Activated B cell treated with CpG ODN at 0.5 μM for 24 hours (primary cell): ENCODE measurements at regions of chr16 and their contacts with region 1.

Region 1: DNA sequence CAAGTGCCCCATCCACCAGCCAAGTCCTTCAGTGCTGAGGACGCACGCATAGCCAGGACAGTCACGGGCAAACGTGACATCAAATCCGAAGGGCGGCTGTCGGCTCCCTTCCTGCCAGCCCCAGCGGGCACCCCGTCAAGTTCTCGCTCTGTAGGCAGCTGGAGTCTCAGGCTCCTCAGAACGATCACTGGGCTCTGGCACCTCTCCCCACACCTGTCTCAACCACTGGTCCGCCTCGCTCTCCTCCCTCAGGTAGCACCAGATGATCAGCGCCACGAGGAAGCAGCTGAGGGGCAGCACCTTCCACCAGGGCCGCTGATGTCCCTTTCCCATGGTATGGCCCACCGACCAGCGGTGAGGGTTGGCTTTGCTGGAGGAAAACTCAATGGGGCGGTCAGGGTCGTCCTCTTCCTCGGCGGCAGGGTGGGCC is 421 bp downstream of the UQCC4 start:
- DNase-seq: no peak
- ATAC-seq: no peak
- H3K4me3 Mint-ChIP-seq: peak overlapping the region; percentile 85
- H3K27ac Mint-ChIP-seq: peak overlapping the region; percentile 98
- H3K4me1 Mint-ChIP-seq: peaks cover 25% of the 10 kb centered on the region
- H3K27me3 Mint-ChIP-seq: no peaks in the 10 kb centered on the region
- CTCF ChIP-seq: no peak

Region 2: DNA sequence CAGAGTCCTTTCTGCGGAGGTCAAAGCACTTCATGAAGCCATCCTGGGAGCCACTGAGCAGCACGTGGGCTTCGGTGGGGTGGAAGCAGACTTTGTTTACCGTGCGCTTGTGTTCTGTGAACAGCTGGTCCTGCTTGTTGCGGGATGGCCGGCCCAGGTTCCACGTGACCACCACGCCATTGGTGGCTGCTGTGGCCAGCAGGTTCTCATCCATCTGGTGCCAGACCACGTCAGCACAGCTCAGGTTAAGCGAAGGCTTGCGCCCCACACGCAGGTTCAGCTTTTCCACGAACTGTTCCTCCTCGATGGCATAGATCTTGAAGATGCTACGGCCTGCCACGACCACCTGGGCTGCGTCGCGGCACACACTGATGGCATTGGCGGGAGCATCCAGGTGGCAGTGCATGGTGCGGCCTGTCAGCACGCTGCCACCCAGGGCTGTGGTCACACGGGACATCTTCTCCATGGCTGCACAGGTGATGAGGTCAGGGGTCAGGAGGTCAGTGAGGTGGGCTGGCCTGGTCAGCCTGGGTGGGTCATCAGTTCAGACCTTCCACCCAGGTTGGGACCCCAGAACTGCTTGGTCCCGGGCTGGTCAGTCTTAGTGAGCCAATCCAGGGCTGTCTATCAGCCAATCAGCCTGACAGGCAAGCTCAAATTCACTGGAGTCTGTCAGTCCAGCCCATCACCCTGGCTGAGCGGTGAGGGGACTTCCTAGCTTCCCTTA is 730.8 kb before region 1 on chr16:
- CTCF ChIA-PET with region 1: no interaction called
- POLR2A ChIA-PET with region 1: interaction called, 10 read pairs
- intact Hi-C with region 1: no loop called
- DNase-seq: no peak
- ATAC-seq: no peak
- H3K4me3 Mint-ChIP-seq: peak overlapping the region; percentile 90
- H3K27ac Mint-ChIP-seq: peak overlapping the region; percentile 82
- H3K4me1 Mint-ChIP-seq: peaks cover 33% of the 10 kb centered on the region
- H3K27me3 Mint-ChIP-seq: peaks cover 9% of the 10 kb centered on the region
- CTCF ChIP-seq: no peak

Region 3: DNA sequence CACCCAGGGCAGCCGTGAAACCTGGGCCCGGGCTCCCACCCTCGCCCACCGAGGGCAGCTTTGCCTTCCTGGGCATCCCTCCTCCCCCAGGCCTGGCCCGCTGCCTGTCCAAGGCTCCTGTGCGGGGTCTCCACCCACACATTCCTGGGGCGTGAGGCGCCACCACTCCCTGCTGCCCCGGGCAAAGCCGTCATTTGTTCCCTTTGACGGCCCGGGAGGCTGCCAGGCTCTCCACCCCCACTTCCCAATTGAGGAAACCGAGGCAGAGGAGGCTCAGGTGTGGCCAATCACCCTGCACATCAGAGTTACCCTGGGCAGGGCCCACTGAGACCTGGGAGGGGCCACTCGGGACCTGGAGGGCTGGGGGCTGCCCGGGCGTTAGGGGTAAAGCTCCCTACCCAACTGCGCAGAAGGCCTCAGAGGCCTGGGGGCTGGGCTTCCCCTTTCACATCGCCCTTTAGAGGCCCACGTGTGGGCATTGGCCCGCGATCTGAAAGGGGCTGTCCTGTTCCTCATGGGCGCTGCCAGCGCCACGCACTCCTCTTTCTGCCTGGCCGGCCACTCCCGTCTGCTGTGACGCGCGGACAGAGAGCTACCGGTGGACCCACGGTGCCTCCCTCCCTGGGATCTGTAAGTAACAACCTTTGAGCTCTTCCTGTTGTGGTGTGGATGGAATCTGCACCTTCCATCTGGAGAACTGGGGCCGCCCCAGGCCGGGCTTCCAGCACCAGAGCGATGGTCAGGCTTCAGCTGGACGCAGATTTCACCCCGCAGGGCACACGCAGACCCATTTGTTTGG is 659.4 kb before region 1 on chr16 and contains the start of gene MSLN:
- CTCF ChIA-PET with region 1: no interaction called
- POLR2A ChIA-PET with region 1: no interaction called
- intact Hi-C with region 1: no loop called
- DNase-seq: no peak
- ATAC-seq: no peak
- H3K4me3 Mint-ChIP-seq: no peak within 1 kb of the TSS
- H3K27ac Mint-ChIP-seq: no peak within 1 kb of the TSS
- H3K4me1 Mint-ChIP-seq: no peaks in the 10 kb centered on the region
- H3K27me3 Mint-ChIP-seq: peaks cover 10% of the 10 kb centered on the region
- CTCF ChIP-seq: no peak
- total RNA-seq, gene MSLN: not detected in 2 replicates

Region 4: GRCh38 chr16:1351582-1352362 is 68.4 kb before region 1 on chr16 and contains the starts of genes GNPTG and TSR3:
- CTCF ChIA-PET with region 1: no interaction called
- POLR2A ChIA-PET with region 1: interaction called, 6 read pairs
- intact Hi-C with region 1: loop called (anchors 2 kb)
- DNase-seq: peak; percentile 92
- ATAC-seq: peak; percentile 93
- H3K4me3 Mint-ChIP-seq: peak within 1 kb of the TSS; percentile 85
- H3K27ac Mint-ChIP-seq: peak within 1 kb of the TSS; percentile 77
- H3K4me1 Mint-ChIP-seq: peaks cover 30% of the 10 kb centered on the region
- H3K27me3 Mint-ChIP-seq: no peaks in the 10 kb centered on the region
- CTCF ChIP-seq: no peak
- total RNA-seq, gene GNPTG: 36.3 and 40.2 TPM in 2 replicates
- total RNA-seq, gene TSR3: 45.3 and 49.0 TPM in 2 replicates

Region 5: DNA sequence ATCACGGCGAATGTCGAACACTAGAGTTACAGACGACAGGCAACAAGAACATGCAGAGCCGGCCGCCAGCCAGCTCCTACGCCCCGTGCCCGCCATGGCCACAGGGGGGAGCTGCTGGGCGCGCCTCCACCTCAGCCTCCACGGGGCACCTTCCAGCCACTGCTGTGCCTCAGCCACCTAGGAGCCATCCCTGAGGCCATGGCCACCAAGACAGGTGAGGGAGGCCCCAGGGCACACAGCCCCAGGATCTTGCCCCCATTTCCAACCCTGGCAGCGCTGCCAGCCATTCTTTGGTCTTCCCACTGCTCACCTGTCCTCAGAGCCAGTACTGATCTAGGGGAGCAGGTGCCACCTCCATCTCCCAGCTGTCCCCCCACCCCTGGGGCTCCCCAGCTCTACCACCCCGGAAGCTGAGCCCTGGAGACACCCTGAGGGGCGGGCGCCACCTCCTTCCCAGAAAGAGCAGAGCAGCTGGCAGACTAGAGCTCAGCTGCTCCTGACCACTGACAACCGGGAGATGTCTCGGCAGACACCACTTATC is 56.6 kb before region 1 on chr16:
- CTCF ChIA-PET with region 1: no interaction called
- POLR2A ChIA-PET with region 1: no interaction called
- intact Hi-C with region 1: no loop called
- DNase-seq: peak; percentile 72
- ATAC-seq: peak; percentile 96
- H3K4me3 Mint-ChIP-seq: no peak overlapping the region
- H3K27ac Mint-ChIP-seq: no peak overlapping the region
- H3K4me1 Mint-ChIP-seq: peaks cover 3% of the 10 kb centered on the region
- H3K27me3 Mint-ChIP-seq: no peaks in the 10 kb centered on the region
- CTCF ChIP-seq: no peak

Region 6: GRCh38 chr16:1443403-1443973 is 23.4 kb after region 1 on chr16:
- CTCF ChIA-PET with region 1: no interaction called
- POLR2A ChIA-PET with region 1: interaction called, 16 read pairs
- intact Hi-C with region 1: no loop called
- DNase-seq: no peak
- ATAC-seq: no peak
- H3K4me3 Mint-ChIP-seq: no peak overlapping the region
- H3K27ac Mint-ChIP-seq: no peak overlapping the region
- H3K4me1 Mint-ChIP-seq: peaks cover 7% of the 10 kb centered on the region
- H3K27me3 Mint-ChIP-seq: no peaks in the 10 kb centered on the region
- CTCF ChIP-seq: no peak

Region 7: DNA sequence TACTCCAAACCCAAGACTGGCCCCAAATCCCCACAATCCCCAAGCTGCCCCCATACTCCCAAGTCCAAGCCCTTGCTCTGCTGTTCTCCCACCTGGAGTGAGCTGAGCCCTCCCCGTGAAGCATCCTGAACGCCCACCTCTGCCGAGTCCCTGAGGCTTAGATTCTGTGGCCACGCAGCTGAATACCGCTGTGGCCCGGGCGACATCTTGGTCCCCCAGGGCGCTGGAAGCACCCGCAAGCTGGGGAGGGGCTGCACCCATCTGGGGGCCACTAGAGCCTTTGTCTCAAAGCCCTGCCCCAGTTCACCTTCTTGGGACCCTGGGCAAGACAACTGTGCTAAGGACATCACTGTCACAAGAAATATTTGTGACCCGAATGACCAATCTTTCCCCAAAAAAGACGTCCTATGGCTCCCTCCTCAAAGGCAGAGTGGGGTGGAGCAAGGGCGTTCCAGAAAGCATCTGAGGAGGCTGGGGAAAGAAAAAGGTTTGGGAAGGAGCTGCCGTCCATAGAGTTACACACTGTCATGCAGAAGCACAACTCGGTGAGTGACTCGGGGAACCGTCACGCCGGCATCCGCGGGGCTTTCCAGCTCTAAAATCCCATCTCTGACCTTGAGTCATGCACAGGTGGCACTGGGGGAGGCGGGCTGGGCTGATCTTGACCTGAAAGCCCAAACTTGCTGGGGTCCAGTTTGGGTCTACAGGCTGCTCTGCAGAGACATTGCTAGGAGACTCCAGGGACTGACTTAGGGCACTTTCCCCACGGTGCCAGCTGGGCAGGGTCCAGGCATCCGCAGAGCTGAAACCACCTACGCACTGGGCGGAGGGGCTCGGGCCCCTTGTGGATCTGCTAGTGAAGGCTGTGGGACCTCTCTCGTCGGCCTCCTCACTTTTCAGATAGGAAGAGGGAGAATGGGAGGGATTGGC is 62.0 kb after region 1 on chr16:
- CTCF ChIA-PET with region 1: no interaction called
- POLR2A ChIA-PET with region 1: interaction called, 22 read pairs
- intact Hi-C with region 1: no loop called
- DNase-seq: no peak
- ATAC-seq: no peak
- H3K4me3 Mint-ChIP-seq: no peak overlapping the region
- H3K27ac Mint-ChIP-seq: no peak overlapping the region
- H3K4me1 Mint-ChIP-seq: peaks cover 42% of the 10 kb centered on the region
- H3K27me3 Mint-ChIP-seq: no peaks in the 10 kb centered on the region
- CTCF ChIP-seq: no peak

Region 8: GRCh38 chr16:1705688-1706385 is 285.7 kb after region 1 on chr16 and contains the start of gene MAPK8IP3:
- CTCF ChIA-PET with region 1: no interaction called
- POLR2A ChIA-PET with region 1: interaction called, 21 read pairs
- intact Hi-C with region 1: loop called (anchors 5 kb)
- DNase-seq: peak; percentile 100
- ATAC-seq: peak; percentile 81
- H3K4me3 Mint-ChIP-seq: peak within 1 kb of the TSS; percentile 99
- H3K27ac Mint-ChIP-seq: peak within 1 kb of the TSS; percentile 98
- H3K4me1 Mint-ChIP-seq: peaks cover 38% of the 10 kb centered on the region
- H3K27me3 Mint-ChIP-seq: no peaks in the 10 kb centered on the region
- CTCF ChIP-seq: no peak
- total RNA-seq, gene MAPK8IP3: 157 and 201 TPM in 2 replicates